ENCODE measurements at regions of chr18 and their contacts with region 1.

Region 1: GRCh38 chr18:59109375-59109774 is 30.3 kb upstream of the SEC11C start:
- DNase-seq: no peak
- H3K4me3 ChIP-seq: no peak overlapping the region
- CTCF ChIP-seq: no peak
- POLR2A ChIP-seq: no peak

Region 2: DNA sequence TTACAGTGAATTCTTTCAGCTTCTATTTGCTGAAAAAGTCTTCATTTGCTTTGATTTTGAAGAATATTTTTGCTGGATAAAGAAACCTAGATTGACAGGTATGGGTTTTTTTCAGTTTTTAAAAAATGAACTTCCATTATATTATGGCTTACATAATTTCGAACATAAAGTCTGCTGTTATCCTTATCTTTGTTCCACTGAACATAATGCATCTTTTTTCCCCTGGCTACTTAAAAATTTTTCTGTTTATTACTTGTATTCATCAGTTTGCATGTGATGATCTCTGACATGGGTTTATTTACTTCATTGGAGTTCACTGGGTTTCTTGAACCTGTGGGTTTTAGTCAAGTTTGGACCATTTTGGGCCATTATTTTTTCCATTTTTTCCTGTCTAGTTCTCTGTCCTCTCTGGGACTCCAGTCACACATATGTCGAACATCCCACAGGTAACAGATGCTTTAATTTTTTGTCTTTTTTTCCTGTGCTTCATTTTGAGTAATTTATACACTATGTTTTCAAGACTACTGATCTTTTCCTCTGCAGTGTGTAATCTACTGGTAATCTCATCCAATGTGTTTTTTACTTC is 63.4 kb after region 1 on chr18:
- intact Hi-C with region 1: loop called (anchors 10 kb)
- DNase-seq: no peak
- H3K4me3 ChIP-seq: no peak overlapping the region
- CTCF ChIP-seq: no peak
- POLR2A ChIP-seq: no peak